AG04449 (cell line): ENCODE measurements at regions of chr19 and their contacts with region 1.

Region 1: GRCh38 chr19:49570138-49570856 is 10.1 kb downstream of the NOSIP start:
- DNase-seq: no peak
- H3K4me3 ChIP-seq: no peak overlapping the region
- CTCF ChIP-seq: peak; percentile 79

Region 2: GRCh38 chr19:49473868-49474544 is 96.3 kb before region 1 on chr19 and contains the start of gene FLT3LG:
- CTCF ChIA-PET with region 1: interaction called, 29 read pairs
- POLR2A ChIA-PET with region 1: no interaction called
- DNase-seq: no peak
- H3K4me3 ChIP-seq: peak within 1 kb of the TSS; percentile 75
- CTCF ChIP-seq: peak; percentile 99

Region 3: DNA sequence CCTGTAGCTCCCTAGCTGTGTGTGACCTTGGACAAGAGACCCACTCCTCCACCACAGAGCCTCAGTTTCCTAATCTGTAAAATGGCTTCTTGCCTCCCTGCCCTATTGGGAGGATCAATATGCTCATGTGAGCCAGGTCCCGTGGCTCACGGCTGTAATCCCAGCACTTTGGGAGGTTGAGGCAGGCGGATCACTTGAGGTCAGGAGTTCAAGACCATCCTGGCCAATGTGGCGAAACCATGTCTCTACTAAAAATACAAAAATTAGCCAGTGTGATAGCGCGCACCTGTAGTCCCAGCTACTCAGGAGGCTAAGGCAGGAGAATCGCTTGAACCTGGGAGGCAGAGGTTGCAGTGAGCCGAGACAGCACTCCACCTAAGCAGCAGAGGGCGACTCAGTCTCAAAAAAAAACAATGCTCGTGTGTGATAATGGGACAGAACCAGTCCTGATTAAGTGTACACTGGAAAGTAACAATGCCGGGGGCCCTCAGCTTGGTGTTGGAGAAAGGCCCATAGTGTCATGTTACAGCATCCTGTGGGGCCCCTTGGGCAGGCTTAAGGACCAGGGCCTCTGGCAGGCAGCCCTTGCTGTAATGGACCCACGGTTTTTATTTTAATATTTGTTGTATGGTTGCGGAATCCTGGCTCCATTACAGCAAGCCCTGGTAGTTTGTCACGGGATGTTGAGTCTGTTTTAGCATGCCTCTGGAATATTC is 67.3 kb before region 1 on chr19:
- CTCF ChIA-PET with region 1: interaction called, 197 read pairs
- POLR2A ChIA-PET with region 1: interaction called, 3 read pairs
- DNase-seq: no peak
- H3K4me3 ChIP-seq: no peak overlapping the region
- CTCF ChIP-seq: peak; percentile 57

Region 4: DNA sequence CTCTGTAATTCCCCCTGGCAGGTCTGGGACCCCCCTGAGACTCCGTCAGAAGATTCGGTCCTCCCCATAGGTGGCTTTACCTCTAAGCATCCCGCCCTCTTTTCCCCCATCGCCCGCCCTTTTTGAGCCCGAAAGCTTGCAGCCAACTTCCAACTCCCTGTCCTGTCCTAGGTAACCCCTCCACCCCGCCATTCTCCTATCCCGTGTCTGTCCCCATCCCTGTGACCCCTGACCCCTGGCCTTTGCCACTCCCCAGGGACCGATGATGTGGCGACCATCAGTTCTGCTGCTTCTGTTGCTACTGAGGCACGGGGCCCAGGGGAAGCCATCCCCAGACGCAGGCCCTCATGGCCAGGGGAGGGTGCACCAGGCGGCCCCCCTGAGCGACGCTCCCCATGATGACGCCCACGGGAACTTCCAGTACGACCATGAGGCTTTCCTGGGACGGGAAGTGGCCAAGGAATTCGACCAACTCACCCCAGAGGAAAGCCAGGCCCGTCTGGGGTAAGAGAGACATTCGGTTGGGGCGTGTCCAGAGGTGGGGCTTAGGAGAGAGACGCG is 42.0 kb before region 1 on chr19:
- CTCF ChIA-PET with region 1: interaction called, 11 read pairs
- POLR2A ChIA-PET with region 1: interaction called, 3 read pairs
- DNase-seq: no peak
- H3K4me3 ChIP-seq: peak overlapping the region; percentile 91
- CTCF ChIP-seq: no peak

Region 5: GRCh38 chr19:49555600-49556411 is 14.5 kb before region 1 on chr19:
- CTCF ChIA-PET with region 1: interaction called, 200 read pairs
- POLR2A ChIA-PET with region 1: no interaction called
- DNase-seq: no peak
- H3K4me3 ChIP-seq: no peak overlapping the region
- CTCF ChIP-seq: no peak

Region 6: DNA sequence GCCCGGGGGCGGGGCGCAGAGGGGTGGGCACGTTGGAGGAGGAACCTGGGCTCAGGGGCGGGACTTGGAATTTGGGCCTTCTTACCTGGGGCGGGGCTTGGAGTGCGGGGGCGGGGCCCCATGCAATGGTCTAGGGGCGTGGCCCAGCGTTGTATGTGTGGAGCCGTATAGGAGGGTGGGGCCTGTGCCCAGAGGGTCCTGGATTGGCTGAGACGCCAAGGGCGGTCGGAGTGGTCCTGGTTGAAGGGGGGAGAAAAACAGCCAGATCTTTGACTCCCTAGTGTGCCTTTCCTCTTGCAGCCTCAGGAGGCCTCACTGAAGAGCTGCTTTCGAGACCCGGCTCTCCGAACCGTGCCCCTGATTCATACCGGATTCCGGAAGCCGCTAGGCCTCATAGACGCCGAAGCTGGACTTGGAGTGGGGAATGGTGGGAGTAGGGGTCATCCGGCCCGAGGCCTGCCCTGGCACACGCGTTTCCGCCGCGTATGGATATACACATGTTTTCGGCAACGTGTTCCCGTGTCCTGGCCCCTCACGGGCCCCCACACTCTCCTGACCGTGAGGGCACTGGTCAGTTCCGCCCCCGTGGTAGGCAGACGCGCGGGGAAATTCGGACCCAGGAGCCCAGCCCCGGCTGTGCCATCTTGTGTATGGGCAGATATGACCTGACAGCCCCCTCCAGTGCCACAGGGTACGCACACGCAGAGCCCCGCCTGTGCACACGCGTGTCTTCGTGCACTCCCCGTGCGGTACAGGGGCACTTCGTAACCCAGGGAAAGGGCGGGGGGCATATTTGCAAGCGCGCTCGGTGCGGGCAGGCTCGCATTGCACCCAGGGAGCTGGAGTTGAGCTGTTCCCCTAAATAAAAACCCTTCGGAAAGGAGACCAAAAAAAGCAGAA is 20.0 kb after region 1 on chr19:
- CTCF ChIA-PET with region 1: interaction called, 16 read pairs
- POLR2A ChIA-PET with region 1: interaction called, 8 read pairs
- DNase-seq: peak; percentile 67
- H3K4me3 ChIP-seq: peak overlapping the region; percentile 85
- CTCF ChIP-seq: no peak